ENCODE measurements at regions of chr2 and their contacts with region 1.

Region 1: GRCh38 chr2:240704651-240705050 is 13.0 kb downstream of the AQP12A start:
- DNase-seq: peak in 3 of 5 donors; percentile 10 to 29 (median 11)
- ATAC-seq: no peak
- H3K4me3 ChIP-seq: no peak overlapping the region
- H3K27ac ChIP-seq: no peak overlapping the region
- H3K4me1 ChIP-seq: peaks cover 0 to 7% (median 0%) of the 10 kb centered on the region in 12 donors
- H3K27me3 ChIP-seq: peaks cover 0 to 45% (median 5%) of the 10 kb centered on the region in 9 donors
- CTCF ChIP-seq: no peak
- POLR2A ChIP-seq: no peak

Region 2: DNA sequence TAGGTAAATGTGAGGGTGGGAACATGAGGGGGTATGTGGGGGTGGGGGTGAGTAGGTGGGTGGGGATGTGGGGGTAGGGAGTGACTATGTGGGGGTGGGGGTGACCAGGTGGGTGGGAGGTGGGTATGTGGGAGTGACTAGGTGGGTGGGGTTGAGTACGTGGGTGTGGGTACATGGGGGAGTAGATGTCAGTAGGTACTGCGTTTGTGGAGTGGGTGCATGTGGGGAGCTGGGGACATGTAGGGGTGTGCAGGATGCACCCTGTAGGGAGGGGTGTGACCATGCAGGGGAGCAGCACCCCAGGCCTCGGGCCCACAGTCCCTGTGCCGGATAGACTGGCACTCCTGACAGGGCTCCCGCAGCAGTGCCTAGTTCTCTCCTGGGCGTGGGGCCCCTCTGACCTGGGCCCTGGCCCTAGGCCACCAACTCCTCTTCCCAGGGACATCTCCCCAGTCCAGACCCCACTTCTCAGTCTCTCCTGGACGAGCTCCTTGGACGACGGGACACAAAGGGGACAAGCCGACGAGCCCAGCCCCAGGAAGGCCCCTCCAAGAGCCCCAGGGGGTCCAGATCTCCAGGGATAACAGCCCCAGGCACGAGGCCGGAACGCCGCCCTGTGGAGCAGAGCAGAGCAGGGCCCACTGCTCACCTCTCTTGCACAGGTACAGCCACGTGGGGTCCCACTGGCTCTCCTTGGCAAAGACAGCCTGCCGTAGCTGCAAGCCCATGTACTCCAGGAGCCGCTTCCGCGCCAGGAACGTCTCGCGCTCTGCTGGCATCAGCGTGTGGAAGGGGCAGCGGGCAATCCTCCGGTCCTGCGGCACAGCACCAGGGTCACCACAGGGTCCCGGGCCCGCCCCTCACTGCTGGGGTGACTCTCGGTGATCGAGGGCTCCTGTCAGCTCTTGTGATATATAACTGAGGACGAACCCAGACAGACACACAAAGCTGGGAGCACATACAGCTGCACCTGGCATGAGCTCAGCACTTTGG is 205.0 kb before region 1 on chr2:
- intact Hi-C with region 1: loop called in 1 of 10 experiments (anchors 10 kb)
- DNase-seq: peak in 2 of 5 donors; percentile 22 to 42
- ATAC-seq: no peak
- H3K4me3 ChIP-seq: no peak overlapping the region
- H3K27ac ChIP-seq: no peak overlapping the region
- H3K4me1 ChIP-seq: no peaks in the 10 kb centered on the region
- H3K27me3 ChIP-seq: no peaks in the 10 kb centered on the region
- CTCF ChIP-seq: no peak
- POLR2A ChIP-seq: no peak

Region 3: DNA sequence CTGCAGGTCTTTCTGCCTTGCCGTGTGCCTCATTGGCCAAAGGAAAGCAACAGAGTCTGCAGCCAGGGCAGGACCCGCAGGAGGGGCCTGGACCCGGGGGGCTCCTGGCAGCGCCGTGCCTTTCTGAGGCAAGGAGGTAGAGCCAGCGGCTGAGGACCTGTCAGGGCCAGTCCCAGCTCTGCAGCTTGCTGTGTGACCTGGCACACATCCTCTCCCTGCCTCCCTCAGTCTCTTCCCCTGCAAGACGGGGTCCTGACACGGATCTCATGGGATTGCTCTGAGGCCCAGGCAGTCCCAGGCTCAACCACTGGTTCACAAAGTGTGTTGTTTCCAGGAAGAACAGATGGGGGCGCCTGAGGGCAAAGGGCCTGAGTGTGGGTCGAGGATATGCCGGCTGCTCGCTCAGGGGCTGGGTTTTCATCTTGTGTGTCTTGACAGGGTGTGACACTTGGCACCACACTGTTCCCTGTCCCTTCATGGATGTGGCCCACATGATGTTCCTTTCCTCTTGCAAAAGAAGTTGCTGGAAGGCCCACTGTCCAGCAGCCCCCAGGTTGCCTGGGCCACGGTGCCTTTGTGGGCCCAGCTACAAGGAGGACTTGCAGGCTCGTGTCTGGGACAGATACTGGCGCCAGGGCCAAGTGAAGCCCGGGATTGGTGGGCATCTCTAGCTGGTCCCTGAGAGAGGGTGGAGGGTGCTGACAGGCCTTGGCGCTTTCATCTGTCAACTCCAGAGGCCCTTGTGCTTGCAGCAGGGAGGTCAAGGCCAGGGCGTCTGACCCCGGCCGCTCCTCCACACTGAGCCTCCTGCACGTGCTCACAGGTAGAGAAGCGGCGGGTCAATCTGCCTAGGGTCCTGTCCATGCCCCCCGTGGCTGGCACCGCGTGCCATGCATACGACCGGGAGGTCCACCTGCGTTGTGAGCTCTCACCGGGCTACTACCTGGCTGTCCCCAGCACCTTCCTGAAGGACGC is 108.9 kb before region 1 on chr2:
- intact Hi-C with region 1: loop called in 1 of 10 experiments (anchors 10 kb)
- DNase-seq: peak in 4 of 5 donors; percentile 30 to 75 (median 54)
- ATAC-seq: peak in 3 of 4 donors; percentile 10 to 40 (median 25)
- H3K4me3 ChIP-seq: no peak overlapping the region
- H3K27ac ChIP-seq: peak overlapping the region in 10 of 12 donors; percentile 29 to 84 (median 76)
- H3K4me1 ChIP-seq: peaks cover 0 to 52% (median 28%) of the 10 kb centered on the region in 12 donors
- H3K27me3 ChIP-seq: no peaks in the 10 kb centered on the region
- CTCF ChIP-seq: peak in 7 of 12 donors; percentile 5 to 40 (median 25)
- POLR2A ChIP-seq: no peak

Region 4: DNA sequence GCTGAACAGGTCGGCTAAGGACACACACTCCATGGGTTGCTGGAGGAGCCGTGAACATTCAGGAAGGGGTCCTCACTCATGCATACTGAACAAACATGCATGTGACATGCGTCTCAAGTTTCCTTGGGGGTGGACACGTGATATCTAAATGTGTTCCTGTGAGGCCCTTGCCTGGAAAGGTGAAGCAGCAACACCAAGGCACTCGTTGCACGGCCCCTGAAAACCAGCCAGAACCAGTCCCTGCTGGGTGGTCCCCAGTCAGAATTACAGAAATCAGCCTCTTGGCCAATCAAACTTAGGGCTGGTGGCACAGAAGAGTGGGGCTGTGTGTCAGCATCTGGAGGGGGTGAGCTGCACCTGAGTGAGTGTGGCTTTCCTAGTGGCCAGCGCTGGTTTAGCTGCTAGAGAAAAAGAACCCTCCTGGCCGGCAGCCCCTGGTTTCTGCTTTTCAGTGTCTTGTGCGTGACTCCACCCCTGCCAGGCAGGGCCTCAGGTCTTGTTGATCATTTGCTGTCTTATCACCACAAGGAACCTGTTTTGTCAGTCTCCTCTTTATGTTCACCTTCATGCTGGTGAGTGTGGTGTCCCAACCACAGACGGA is 18.8 kb before region 1 on chr2:
- intact Hi-C with region 1: no loop called
- DNase-seq: no peak
- ATAC-seq: no peak
- H3K4me3 ChIP-seq: no peak overlapping the region
- H3K27ac ChIP-seq: no peak overlapping the region
- H3K4me1 ChIP-seq: no peaks in the 10 kb centered on the region
- H3K27me3 ChIP-seq: no peaks in the 10 kb centered on the region
- CTCF ChIP-seq: no peak
- POLR2A ChIP-seq: no peak

Measured in heart left ventricle (tissue), 16 donors.